CD4-positive, alpha-beta memory T cell (primary cell): ENCODE measurements at regions of chr6 and their contacts with region 1.

Region 1: DNA sequence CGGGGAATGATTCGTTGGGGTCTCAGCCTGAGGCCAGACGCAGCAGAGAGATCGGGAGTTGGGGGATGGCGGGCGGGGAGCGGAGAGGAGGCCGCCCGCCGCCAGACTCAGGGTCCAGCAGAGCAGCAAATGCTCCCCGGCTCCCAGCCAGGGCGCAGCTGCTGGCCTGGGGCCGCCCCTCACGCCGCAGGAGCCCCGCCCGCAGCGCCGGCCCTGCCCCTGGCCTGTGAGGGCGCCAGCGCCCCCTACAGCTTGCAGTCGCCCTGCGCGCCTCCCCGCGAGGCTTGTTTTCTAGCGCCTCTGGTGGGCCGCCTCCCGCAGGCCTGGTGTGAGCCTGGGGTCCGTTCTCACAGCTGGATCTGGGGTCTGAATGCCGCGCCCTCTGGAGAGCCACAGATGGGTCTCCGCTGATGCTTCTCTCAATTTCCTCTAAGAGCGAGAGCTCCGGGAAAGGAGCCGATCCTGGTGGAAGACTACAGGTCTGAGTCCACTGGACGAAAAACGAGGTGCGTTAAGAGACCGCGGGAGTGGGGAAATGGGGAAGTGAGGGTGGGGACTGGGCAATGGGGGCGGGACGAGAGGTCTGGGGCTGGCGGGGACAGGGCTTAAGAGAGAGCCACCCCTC is 29.9 kb downstream of the TRIM38 start:
- DNase-seq: peak; percentile 85 to 94 (median 89)
- H3K4me3 ChIP-seq: peak overlapping the region; percentile 72 to 95
- H3K4me3 Mint-ChIP-seq: peak overlapping the region; percentile 91 to 95 (median 94)
- H3K27ac ChIP-seq: peak overlapping the region; percentile 64
- H3K27ac Mint-ChIP-seq: peak overlapping the region; percentile 89 to 96 (median 94)
- H3K4me1 ChIP-seq: no peaks in the 10 kb centered on the region
- H3K4me1 Mint-ChIP-seq: peaks cover 9 to 23% (median 16%) of the 10 kb centered on the region in 4 donors
- H3K27me3 ChIP-seq: no peaks in the 10 kb centered on the region
- H3K27me3 Mint-ChIP-seq: no peaks in the 10 kb centered on the region

Region 2: GRCh38 chr6:25717866-25718740 is 274.4 kb before region 1 on chr6:
- CTCF ChIA-PET with region 1: interaction called, 4 read pairs
- POLR2A ChIA-PET with region 1: no interaction called
- intact Hi-C with region 1: loop called (anchors 1 kb)
- DNase-seq: peak in 4 of 5 donors; percentile 4 to 14 (median 9)
- H3K4me3 ChIP-seq: no peak overlapping the region
- H3K4me3 Mint-ChIP-seq: no peak overlapping the region
- H3K27ac ChIP-seq: no peak overlapping the region
- H3K27ac Mint-ChIP-seq: no peak overlapping the region
- H3K4me1 ChIP-seq: no peaks in the 10 kb centered on the region
- H3K4me1 Mint-ChIP-seq: peaks cover 0 to 3% (median 0%) of the 10 kb centered on the region in 4 donors
- H3K27me3 ChIP-seq: no peaks in the 10 kb centered on the region
- H3K27me3 Mint-ChIP-seq: peaks cover 10 to 11% of the 10 kb centered on the region in 2 donors

Region 3: GRCh38 chr6:25882051-25882496 is 110.5 kb before region 1 on chr6:
- CTCF ChIA-PET with region 1: interaction called, 4 read pairs
- POLR2A ChIA-PET with region 1: interaction called, 3 read pairs
- intact Hi-C with region 1: loop called (anchors 5 kb)
- DNase-seq: peak in 3 of 5 donors; percentile 45 to 73 (median 63)
- H3K4me3 ChIP-seq: peak overlapping the region in 1 of 2 donors; percentile 44
- H3K4me3 Mint-ChIP-seq: peak overlapping the region in 5 of 8 donors; percentile 86 to 94 (median 90)
- H3K27ac ChIP-seq: peak overlapping the region; percentile 31
- H3K27ac Mint-ChIP-seq: peak overlapping the region in 5 of 7 donors; percentile 63 to 97 (median 91)
- H3K4me1 ChIP-seq: no peaks in the 10 kb centered on the region
- H3K4me1 Mint-ChIP-seq: peaks cover under 1 to 8% (median 4%) of the 10 kb centered on the region in 4 donors
- H3K27me3 ChIP-seq: no peaks in the 10 kb centered on the region
- H3K27me3 Mint-ChIP-seq: peaks cover 0 to 2% of the 10 kb centered on the region in 2 donors

Region 4: DNA sequence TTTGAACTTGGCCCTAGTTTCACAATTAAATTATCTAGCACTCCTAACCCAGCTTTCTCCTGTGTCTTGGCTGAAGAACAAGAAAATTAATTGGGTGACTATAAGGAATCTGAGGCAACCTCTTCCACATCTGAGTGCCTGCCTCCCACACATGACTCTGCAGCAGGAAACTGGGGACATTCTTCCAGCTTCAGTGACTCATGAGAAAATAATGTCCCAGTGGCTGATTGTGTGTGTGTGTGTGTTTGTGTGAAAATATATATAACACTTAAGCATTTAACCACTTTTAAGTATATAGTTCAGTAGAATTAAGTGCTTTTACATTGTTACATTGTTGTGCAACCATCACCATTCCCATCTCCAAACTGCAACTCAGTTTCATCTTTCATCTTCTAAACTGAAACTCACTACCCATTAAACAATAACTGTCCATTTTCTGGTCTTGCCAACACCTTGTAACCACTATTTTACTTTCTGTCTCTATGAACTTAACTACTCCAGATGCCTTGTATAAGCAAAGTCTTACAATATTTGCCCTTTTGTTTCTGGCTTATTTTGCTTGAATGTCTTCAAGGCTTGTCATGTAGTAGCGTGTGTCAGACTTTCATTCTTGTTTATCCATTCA is 21.2 kb before region 1 on chr6:
- CTCF ChIA-PET with region 1: interaction called, 32 read pairs
- POLR2A ChIA-PET with region 1: interaction called, 28 read pairs
- intact Hi-C with region 1: no loop called
- DNase-seq: no peak
- H3K4me3 ChIP-seq: no peak overlapping the region
- H3K4me3 Mint-ChIP-seq: peak overlapping the region in 1 of 8 donors; percentile 19
- H3K27ac ChIP-seq: no peak overlapping the region
- H3K27ac Mint-ChIP-seq: peak overlapping the region in 6 of 7 donors; percentile 16 to 88 (median 73)
- H3K4me1 ChIP-seq: peaks cover 52% of the 10 kb centered on the region
- H3K4me1 Mint-ChIP-seq: peaks cover 47 to 70% (median 54%) of the 10 kb centered on the region in 4 donors
- H3K27me3 ChIP-seq: no peaks in the 10 kb centered on the region
- H3K27me3 Mint-ChIP-seq: no peaks in the 10 kb centered on the region

Region 5: GRCh38 chr6:26003102-26003694 is 10.7 kb after region 1 on chr6:
- CTCF ChIA-PET with region 1: interaction called, 78 read pairs
- POLR2A ChIA-PET with region 1: interaction called, 13 read pairs
- intact Hi-C with region 1: no loop called
- DNase-seq: peak; percentile 21 to 48 (median 37)
- H3K4me3 ChIP-seq: no peak overlapping the region
- H3K4me3 Mint-ChIP-seq: no peak overlapping the region
- H3K27ac ChIP-seq: no peak overlapping the region
- H3K27ac Mint-ChIP-seq: peak overlapping the region in 1 of 7 donors; percentile 59
- H3K4me1 ChIP-seq: peaks cover 4% of the 10 kb centered on the region
- H3K4me1 Mint-ChIP-seq: peaks cover 0 to 6% (median 5%) of the 10 kb centered on the region in 4 donors
- H3K27me3 ChIP-seq: no peaks in the 10 kb centered on the region
- H3K27me3 Mint-ChIP-seq: no peaks in the 10 kb centered on the region

Region 6: DNA sequence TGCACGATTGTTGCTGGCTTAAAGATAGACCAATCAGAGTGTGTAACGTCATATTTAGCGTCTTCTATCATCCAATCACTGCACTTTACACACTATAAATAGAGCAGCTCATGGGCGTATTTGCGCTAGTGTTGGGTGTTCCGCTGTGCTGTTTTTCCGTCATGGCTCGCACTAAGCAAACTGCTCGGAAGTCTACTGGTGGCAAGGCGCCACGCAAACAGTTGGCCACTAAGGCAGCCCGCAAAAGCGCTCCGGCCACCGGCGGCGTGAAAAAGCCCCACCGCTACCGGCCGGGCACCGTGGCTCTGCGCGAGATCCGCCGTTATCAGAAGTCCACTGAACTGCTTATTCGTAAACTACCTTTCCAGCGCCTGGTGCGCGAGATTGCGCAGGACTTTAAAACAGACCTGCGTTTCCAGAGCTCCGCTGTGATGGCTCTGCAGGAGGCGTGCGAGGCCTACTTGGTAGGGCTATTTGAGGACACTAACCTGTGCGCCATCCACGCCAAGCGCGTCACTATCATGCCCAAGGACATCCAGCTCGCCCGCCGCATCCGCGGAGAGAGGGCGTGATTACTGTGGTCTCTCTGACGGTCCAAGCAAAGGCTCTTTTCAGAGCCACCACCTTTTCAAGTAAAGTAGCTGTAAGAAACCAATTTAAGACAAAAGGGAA is 27.9 kb after region 1 on chr6:
- CTCF ChIA-PET with region 1: interaction called, 70 read pairs
- POLR2A ChIA-PET with region 1: interaction called, 75 read pairs
- intact Hi-C with region 1: loop called (anchors 1 kb)
- DNase-seq: peak; percentile 85 to 92 (median 91)
- H3K4me3 ChIP-seq: peak overlapping the region; percentile 82 to 87
- H3K4me3 Mint-ChIP-seq: peak overlapping the region; percentile 92 to 98 (median 96)
- H3K27ac ChIP-seq: peak overlapping the region; percentile 96
- H3K27ac Mint-ChIP-seq: peak overlapping the region; percentile 96 to 100 (median 100)
- H3K4me1 ChIP-seq: peaks cover 29% of the 10 kb centered on the region
- H3K4me1 Mint-ChIP-seq: peaks cover 14 to 58% (median 32%) of the 10 kb centered on the region in 4 donors
- H3K27me3 ChIP-seq: no peaks in the 10 kb centered on the region
- H3K27me3 Mint-ChIP-seq: peaks cover 0 to 1% of the 10 kb centered on the region in 2 donors

Region 7: GRCh38 chr6:26103770-26104456 is 111.4 kb after region 1 on chr6:
- CTCF ChIA-PET with region 1: no interaction called
- POLR2A ChIA-PET with region 1: no interaction called
- intact Hi-C with region 1: no loop called
- DNase-seq: peak; percentile 93 to 96 (median 94)
- H3K4me3 ChIP-seq: peak overlapping the region; percentile 36 to 39
- H3K4me3 Mint-ChIP-seq: peak overlapping the region; percentile 84 to 96 (median 92)
- H3K27ac ChIP-seq: peak overlapping the region; percentile 66
- H3K27ac Mint-ChIP-seq: peak overlapping the region; percentile 96 to 100 (median 99)
- H3K4me1 ChIP-seq: peaks cover 17% of the 10 kb centered on the region
- H3K4me1 Mint-ChIP-seq: peaks cover 11 to 19% (median 15%) of the 10 kb centered on the region in 4 donors
- H3K27me3 ChIP-seq: no peaks in the 10 kb centered on the region
- H3K27me3 Mint-ChIP-seq: peaks cover 2 to 6% of the 10 kb centered on the region in 2 donors